ENCODE measurements at regions of chr18 and their contacts with region 1.

Region 1: GRCh38 chr18:64403784-64404503 is 255.1 kb upstream of the LINC00305 start:
- DNase-seq: no peak
- H3K4me3 ChIP-seq: no peak overlapping the region
- H3K27ac ChIP-seq: peak overlapping the region; percentile 76
- H3K4me1 ChIP-seq: peaks cover 3% of the 10 kb centered on the region
- H3K27me3 ChIP-seq: no peaks in the 10 kb centered on the region
- CTCF ChIP-seq: no peak
- POLR2A ChIP-seq: no peak

Region 2: DNA sequence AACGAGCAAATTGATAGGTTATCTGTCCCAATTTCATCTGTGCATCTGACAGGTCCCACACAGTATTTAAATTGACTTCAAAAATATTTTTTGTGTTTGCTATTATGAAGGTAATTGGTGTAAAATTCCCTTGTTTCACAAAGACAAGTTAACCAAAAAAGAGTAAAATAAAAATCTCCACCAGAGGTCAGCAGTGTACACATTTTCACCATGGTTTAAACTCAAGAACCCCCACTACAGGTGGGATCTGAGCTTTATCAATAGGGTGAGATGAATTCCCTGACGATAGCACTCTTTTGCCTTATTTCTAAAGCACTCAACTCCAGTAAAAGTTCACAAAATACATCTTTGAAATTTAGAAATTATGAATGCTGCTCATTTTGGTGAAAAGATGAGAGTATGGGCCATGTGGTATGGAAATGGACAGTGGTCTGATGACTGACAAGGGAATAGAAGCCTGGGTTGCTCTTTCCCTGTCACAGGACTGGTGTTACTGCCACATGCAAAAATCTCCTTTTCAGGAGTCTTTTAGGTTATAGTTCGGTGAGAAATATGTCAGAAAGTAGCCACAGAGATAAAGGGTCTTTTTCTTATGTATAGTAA is 366.0 kb before region 1 on chr18:
- CTCF ChIA-PET with region 1: interaction called, 5 read pairs
- POLR2A ChIA-PET with region 1: no interaction called
- dilution Hi-C with region 1: no loop called
- intact Hi-C with region 1: loop called (anchors 2 kb)
- DNase-seq: peak; percentile 54
- H3K4me3 ChIP-seq: no peak overlapping the region
- H3K27ac ChIP-seq: no peak overlapping the region
- H3K4me1 ChIP-seq: no peaks in the 10 kb centered on the region
- H3K27me3 ChIP-seq: no peaks in the 10 kb centered on the region
- CTCF ChIP-seq: peak; percentile 14 to 38
- POLR2A ChIP-seq: no peak

Region 3: GRCh38 chr18:64276311-64277090 is 127.4 kb before region 1 on chr18:
- CTCF ChIA-PET with region 1: no interaction called
- POLR2A ChIA-PET with region 1: no interaction called
- dilution Hi-C with region 1: no loop called
- intact Hi-C with region 1: loop called (anchors 1 kb)
- DNase-seq: peak; percentile 52
- H3K4me3 ChIP-seq: no peak overlapping the region
- H3K27ac ChIP-seq: no peak overlapping the region
- H3K4me1 ChIP-seq: peaks cover 7% of the 10 kb centered on the region
- H3K27me3 ChIP-seq: no peaks in the 10 kb centered on the region
- CTCF ChIP-seq: no peak
- POLR2A ChIP-seq: no peak

Region 4: GRCh38 chr18:64365106-64365505 is 38.8 kb before region 1 on chr18:
- CTCF ChIA-PET with region 1: no interaction called
- POLR2A ChIA-PET with region 1: no interaction called
- dilution Hi-C with region 1: no loop called
- intact Hi-C with region 1: loop called (anchors 1 kb)
- DNase-seq: peak; percentile 56
- H3K4me3 ChIP-seq: no peak overlapping the region
- H3K27ac ChIP-seq: peak overlapping the region; percentile 34
- H3K4me1 ChIP-seq: peaks cover 16% of the 10 kb centered on the region
- H3K27me3 ChIP-seq: no peaks in the 10 kb centered on the region
- CTCF ChIP-seq: no peak
- POLR2A ChIP-seq: no peak